ENCODE measurements at regions of chr10 and their contacts with region 1.

Region 1: DNA sequence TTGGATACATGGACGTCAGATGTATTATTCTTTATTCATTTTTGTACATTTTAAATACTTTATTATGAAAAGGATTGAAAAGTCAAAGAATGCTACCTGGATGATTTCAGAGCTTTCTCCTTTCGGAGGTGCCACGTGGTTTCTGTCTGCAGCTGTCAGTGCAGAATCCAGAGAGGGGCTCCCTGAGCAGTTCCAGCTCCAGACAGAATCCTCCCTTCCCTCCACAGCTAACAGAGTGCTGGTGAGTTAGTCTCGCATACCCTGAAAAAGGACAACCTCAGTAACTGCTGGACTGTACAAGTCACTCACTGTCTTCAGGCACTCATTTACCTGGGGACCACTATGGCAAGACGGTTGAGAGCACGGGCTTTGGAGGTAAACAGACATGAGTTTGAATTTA is 10.9 kb downstream of the DNMBP start:
- DNase-seq: no peak
- H3K4me3 ChIP-seq: no peak overlapping the region
- H3K27ac ChIP-seq: no peak overlapping the region
- H3K4me1 ChIP-seq: peaks cover 0 to 5% of the 10 kb centered on the region in 2 donors
- H3K27me3 ChIP-seq: no peaks in the 10 kb centered on the region
- CTCF ChIP-seq: no peak
- POLR2A ChIP-seq: no peak

Region 2: DNA sequence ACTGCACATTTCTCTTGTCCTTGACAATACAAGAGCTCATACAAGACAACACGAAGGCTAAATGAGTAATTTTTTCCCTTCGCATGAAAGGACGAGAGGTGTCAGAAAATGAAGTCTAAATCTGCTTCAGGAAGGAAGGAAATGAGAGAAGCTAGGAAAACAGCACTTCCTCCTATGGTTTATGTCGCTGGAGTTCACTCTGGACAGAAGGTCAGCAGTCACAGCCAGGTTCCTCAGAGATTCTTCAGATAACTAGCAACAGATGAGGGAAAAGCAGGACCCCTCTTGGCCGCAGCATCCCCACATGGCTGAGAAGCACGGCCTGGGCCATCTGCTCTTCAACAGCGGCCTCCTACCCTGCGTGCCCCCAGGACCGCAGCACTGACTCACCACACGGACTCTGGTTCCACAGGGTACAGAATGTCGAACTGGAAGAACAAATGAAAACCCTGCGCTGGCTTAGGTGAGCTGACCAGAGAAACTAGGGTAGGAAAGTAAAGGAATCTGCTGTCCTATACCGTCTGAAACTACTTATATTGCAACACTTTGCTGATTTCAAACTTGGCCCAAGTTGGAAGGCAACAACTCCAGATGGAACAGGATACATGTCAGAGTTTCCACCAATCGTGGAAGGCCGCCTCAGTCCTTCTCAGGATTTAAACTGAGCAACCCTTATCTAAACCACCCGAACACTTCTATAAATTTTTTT is 15.5 kb before region 1 on chr10:
- intact Hi-C with region 1: loop called (anchors 1 kb)
- DNase-seq: no peak
- H3K4me3 ChIP-seq: peak overlapping the region in 1 of 3 donors; percentile 8
- H3K27ac ChIP-seq: peak overlapping the region; percentile 71 to 85
- H3K4me1 ChIP-seq: no peaks in the 10 kb centered on the region
- H3K27me3 ChIP-seq: no peaks in the 10 kb centered on the region
- CTCF ChIP-seq: no peak
- POLR2A ChIP-seq: no peak

Region 3: DNA sequence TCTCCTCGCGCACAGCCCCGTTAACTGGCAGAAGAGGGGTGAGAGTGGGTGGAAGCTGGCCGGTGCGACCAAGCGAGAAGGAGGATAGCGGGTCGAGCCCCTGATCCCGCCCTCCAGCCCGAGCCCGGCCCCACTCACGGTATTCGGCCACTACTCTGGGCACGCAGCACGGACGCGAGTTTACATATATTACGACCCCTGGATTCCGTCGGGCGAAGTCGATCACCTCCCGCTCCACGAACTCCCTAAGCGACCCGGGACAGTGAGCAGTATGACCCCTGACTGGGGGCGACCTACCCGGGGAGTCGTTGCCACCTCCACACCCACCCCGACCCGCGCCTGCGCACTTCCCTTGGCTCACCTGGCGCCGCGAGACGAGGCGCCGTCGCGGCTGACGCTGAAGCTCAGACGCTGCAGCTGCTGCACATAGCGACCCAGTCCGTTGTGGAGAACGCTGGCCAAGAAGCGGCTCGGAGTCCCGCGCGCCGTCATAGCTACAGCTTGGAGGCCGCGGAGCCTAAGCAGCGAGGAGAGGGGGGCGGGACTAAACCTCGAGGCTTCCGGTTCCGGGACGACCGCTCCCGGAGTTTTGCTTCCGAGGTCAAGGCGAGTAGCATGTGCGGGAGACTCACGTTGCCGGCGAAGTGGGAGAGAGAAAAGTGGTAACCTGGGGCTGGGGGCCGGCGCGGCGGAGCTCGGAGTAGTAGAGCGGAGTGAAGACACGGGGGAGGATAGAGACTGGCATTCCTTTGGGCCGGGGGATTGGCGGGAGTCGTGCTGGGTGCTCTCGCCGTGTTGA is 988.3 kb after region 1 on chr10 and contains the starts of genes MRPL43 and TWNK:
- intact Hi-C with region 1: no loop called
- DNase-seq: peak; percentile 70 to 80
- H3K4me3 ChIP-seq: peak within 1 kb of the TSS; percentile 65 to 100 (median 66)
- H3K27ac ChIP-seq: peak within 1 kb of the TSS; percentile 40 to 82
- H3K4me1 ChIP-seq: peaks cover 12 to 16% of the 10 kb centered on the region in 2 donors
- H3K27me3 ChIP-seq: no peaks in the 10 kb centered on the region
- CTCF ChIP-seq: no peak
- POLR2A ChIP-seq: peak; percentile 61
- total RNA-seq, gene MRPL43: 75.4 to 104 (median 84.6) TPM
- total RNA-seq, gene TWNK: 3.4 to 7.5 (median 5.3) TPM

Measured in breast epithelium (tissue), 4 donors.